MCF 10A (cell line): ENCODE measurements at regions of chr6 and their contacts with region 1.

Region 1: DNA sequence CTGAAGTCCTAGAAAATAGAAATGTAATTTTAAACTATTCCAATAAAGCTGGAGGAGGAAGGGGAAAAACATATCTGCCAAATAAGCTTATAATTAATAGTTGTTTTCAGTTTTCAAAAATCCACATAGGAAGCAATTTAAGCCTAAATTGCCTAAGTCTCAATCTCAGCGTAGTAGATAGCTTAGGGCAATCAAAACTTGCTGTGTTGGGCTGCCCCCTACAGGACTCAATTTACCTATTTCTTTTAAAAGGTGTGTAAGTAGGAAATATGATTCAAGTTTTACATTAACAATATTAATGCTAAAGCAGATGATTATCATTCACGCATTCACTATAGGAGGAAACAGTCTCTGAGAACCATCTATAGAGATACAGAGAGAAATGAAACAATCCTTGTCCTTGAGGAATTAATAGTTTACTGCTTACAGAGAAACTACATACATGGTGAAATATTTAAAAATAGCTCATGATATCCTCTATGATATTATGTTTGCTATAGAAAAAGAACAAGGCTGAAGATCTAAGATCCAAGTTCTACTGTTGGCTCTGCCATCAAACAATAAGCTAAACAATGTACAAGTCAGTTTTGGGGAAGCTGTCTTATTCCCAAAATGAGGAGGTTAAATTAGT is 102.1 kb downstream of the ATG5 start:
- DNase-seq: peak; percentile 78
- H3K4me3 Mint-ChIP-seq: no peak overlapping the region
- H3K27ac Mint-ChIP-seq: no peak overlapping the region
- H3K4me1 Mint-ChIP-seq: peaks cover 4% of the 10 kb centered on the region
- H3K27me3 Mint-ChIP-seq: no peaks in the 10 kb centered on the region
- CTCF ChIP-seq: peak; percentile 62

Region 2: DNA sequence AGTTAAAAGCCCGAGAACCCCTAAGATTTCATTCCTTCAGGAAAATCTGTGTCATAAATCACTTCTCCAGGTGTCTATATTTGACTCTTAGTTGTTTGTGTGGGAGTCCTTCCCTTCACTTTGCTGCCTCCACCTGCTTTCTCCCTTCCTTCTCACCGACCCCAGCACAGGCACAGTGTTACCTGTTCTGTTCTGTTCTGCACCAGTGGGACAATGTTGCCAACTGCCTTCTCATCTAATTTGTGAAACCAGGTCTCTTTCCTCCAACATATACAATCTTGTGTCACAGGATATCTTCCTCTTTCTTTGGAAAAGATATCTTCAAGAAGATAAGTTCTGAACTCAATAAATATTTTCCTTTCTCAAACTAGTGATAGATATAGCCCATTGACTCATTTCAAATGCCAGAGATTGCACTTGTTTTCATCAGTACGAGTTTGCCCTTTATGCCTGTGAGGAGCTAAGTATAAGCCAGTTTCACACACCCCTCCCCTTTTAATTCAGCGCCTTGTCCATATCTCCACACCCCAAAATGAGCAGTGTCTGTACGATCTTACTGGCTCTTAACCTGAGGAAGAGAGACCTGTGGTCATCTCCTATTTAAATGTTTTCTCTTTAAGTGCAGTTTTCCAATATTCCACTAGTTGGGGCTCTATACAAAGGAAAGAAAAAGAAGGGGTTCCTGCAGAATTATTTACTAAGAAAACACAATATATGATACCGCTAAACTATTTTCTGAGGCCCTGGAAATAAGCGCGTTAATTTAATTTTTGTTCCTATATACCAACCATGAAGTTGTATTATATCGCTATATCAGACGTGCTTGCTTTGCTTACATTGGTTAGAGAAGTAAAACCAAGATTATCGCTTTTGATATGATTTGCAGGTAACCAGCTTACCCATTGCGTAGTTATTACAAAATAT is 738.9 kb before region 1 on chr6:
- CTCF ChIA-PET with region 1: interaction called, 40 read pairs
- POLR2A ChIA-PET with region 1: no interaction called
- intact Hi-C with region 1: loop called (anchors 1 kb)
- DNase-seq: peak; percentile 71
- H3K4me3 Mint-ChIP-seq: peak overlapping the region; percentile 3
- H3K27ac Mint-ChIP-seq: peak overlapping the region; percentile 83
- H3K4me1 Mint-ChIP-seq: peaks cover 36% of the 10 kb centered on the region
- H3K27me3 Mint-ChIP-seq: no peaks in the 10 kb centered on the region
- CTCF ChIP-seq: peak; percentile 80

Region 3: GRCh38 chr6:105733565-105734162 is 489.8 kb before region 1 on chr6:
- CTCF ChIA-PET with region 1: interaction called, 13 read pairs
- POLR2A ChIA-PET with region 1: no interaction called
- intact Hi-C with region 1: loop called (anchors 5 kb)
- DNase-seq: peak; percentile 51
- H3K4me3 Mint-ChIP-seq: no peak overlapping the region
- H3K27ac Mint-ChIP-seq: no peak overlapping the region
- H3K4me1 Mint-ChIP-seq: peaks cover 8% of the 10 kb centered on the region
- H3K27me3 Mint-ChIP-seq: no peaks in the 10 kb centered on the region
- CTCF ChIP-seq: peak; percentile 35

Region 4: GRCh38 chr6:105892577-105893262 is 330.7 kb before region 1 on chr6:
- CTCF ChIA-PET with region 1: no interaction called
- POLR2A ChIA-PET with region 1: no interaction called
- intact Hi-C with region 1: no loop called
- DNase-seq: peak; percentile 7
- H3K4me3 Mint-ChIP-seq: no peak overlapping the region
- H3K27ac Mint-ChIP-seq: no peak overlapping the region
- H3K4me1 Mint-ChIP-seq: peaks cover 7% of the 10 kb centered on the region
- H3K27me3 Mint-ChIP-seq: no peaks in the 10 kb centered on the region
- CTCF ChIP-seq: no peak

Region 5: GRCh38 chr6:106254636-106255035 is 31.2 kb after region 1 on chr6:
- CTCF ChIA-PET with region 1: interaction called, 12 read pairs
- POLR2A ChIA-PET with region 1: no interaction called
- intact Hi-C with region 1: no loop called
- DNase-seq: peak; percentile 87
- H3K4me3 Mint-ChIP-seq: no peak overlapping the region
- H3K27ac Mint-ChIP-seq: no peak overlapping the region
- H3K4me1 Mint-ChIP-seq: peaks cover 44% of the 10 kb centered on the region
- H3K27me3 Mint-ChIP-seq: no peaks in the 10 kb centered on the region
- CTCF ChIP-seq: no peak